Activated CD4-positive, alpha-beta memory T cell treated with anti-CD3 and anti-CD28 coated beads, Interleukin-2, amount 10 ng/mL, durations not matched to agents 7 days and 5 days (primary cell): ENCODE measurements at regions of chr11 and their contacts with region 1.

Region 1: DNA sequence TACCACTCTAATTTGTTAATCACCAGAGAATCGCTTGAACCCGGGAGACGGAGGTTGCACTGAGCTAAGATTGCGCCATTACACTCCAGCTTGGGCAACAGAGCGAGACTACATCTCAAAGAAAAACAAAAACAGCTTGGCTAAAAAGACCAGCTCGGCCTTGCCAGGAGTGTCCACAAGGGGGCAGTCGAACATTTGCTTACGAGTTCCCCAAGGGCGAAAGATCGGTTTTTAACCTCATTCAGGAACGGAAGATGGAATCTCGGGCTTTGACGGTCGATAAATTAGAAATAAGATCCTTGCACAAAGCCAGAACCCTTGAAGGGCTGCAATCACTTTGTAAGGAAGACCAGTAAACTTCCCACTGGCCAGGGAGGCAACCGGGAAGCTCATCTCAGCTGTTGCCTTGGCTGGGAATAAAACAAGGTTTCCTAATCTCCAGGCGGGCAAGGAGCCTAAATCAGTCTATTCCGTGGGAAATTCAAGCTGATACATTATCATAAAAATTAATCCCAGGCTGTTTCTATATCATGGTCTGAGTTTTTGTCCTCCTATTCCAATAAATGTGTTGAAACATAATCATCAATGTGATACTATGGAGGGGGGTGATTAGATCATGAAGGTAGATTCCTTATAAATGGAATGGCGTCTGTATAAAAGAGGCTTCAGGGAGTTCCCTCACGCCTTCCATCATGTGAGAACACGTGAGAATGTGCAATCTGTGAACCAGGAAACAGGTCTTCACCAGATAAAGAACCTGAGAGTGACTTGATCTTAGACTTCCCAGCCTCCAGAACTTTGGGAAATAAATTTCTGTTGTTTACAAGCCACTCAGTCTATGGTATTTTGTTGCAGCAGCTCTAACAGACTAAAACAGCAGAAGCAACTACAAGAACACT is 14.9 kb upstream of the SLC29A2 start:
- DNase-seq: peak; percentile 83
- H3K4me3 Mint-ChIP-seq: peak overlapping the region; percentile 12
- H3K27ac Mint-ChIP-seq: no peak overlapping the region
- H3K4me1 Mint-ChIP-seq: peaks cover 6% of the 10 kb centered on the region
- H3K27me3 Mint-ChIP-seq: peaks cover 7% of the 10 kb centered on the region

Region 2: DNA sequence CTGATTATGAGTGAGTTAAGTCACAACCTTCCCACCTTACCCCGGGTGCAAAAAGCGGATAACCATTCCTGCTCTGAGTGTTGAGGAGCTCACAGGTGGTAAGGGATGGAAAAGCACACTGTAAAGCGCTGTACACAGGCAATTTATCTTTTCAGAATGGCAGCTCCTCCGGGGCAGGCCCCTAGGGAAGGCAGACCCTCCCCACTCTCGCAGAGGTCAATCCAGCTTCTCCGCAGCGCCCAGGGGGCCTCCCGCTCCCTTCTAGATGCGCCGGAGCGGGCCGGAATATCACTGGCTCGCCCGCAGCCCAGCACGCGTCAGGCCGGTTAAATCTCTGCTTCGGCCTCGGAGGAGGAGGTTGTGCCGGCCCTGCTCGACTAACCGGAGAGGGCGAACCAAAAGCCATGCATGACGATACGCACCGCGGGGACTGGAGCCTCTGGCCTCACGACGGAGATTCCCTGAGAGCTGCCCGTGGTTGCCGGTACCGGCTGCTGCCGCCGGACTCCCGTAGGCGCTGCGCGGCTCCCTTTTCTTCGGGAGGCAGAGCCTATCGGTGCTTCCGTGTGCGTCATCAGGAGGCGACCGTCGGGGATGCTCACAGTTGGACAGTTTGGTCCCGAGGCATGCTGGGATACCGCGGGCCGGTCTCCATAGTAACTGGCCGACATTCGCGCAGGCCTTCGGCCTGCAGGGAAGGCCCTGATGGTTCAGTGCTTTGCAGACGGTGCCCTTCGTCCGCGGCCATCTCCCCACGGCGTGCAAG is 41.7 kb before region 1 on chr11 and contains the start of gene BRMS1:
- CTCF ChIA-PET with region 1: interaction called, 19 read pairs
- POLR2A ChIA-PET with region 1: interaction called, 3 read pairs
- DNase-seq: peak; percentile 97
- H3K4me3 Mint-ChIP-seq: peak within 1 kb of the TSS; percentile 96
- H3K27ac Mint-ChIP-seq: peak within 1 kb of the TSS; percentile 87
- H3K4me1 Mint-ChIP-seq: peaks cover 51% of the 10 kb centered on the region
- H3K27me3 Mint-ChIP-seq: no peaks in the 10 kb centered on the region
- total RNA-seq, gene BRMS1: 39.7 to 40.4 TPM

Region 3: GRCh38 chr11:66363805-66364535 is 22.4 kb before region 1 on chr11:
- CTCF ChIA-PET with region 1: interaction called, 35 read pairs
- POLR2A ChIA-PET with region 1: no interaction called
- DNase-seq: peak; percentile 76
- H3K4me3 Mint-ChIP-seq: no peak overlapping the region
- H3K27ac Mint-ChIP-seq: no peak overlapping the region
- H3K4me1 Mint-ChIP-seq: no peaks in the 10 kb centered on the region
- H3K27me3 Mint-ChIP-seq: no peaks in the 10 kb centered on the region

Region 4: DNA sequence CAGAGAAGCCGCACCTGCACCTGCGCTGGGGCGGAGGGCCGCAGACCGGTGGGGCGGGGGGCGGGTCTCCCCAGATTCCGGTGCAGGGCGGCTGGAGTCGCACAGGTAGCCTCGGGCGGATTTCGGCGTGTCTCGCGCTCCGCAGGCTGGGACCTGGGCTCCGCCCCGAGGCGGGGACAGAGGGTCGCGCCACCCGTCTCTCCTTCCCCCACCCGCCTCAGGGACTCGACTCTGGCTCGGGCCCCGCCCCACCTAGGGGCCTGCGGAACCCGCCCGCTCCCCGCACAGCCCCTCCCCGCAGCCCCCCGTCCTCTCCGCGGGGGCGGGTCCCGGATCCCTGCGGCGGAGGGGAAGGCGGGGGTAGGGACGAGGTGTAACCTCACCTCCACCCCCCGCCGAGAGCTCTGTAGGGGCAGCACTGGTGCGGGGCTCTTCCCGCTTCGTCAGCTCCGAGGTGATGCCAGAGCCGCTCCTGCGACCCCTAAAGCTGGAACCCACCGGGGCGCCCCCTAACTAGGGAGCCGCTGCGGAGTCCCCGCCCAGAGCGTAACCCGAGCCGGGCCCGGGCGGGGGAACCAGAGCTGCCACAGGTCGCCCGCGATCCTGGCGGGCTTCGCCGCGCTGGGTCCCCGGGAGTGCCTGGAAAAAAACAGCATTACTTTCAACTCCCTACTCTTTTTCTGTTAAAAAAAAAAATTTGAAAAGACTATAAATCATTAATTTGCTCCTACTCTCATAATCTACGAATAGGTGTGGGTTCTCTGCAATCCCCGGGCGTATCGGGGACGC is 14.6 kb before region 1 on chr11 and contains the start of gene SLC29A2:
- CTCF ChIA-PET with region 1: interaction called, 35 read pairs
- POLR2A ChIA-PET with region 1: interaction called, 4 read pairs
- DNase-seq: peak; percentile 79
- H3K4me3 Mint-ChIP-seq: peak within 1 kb of the TSS; percentile 80
- H3K27ac Mint-ChIP-seq: peak within 1 kb of the TSS; percentile 91
- H3K4me1 Mint-ChIP-seq: peaks cover 19% of the 10 kb centered on the region
- H3K27me3 Mint-ChIP-seq: peaks cover 7% of the 10 kb centered on the region
- total RNA-seq, gene SLC29A2: 8.4 to 9.0 TPM

Region 5: GRCh38 chr11:66408488-66409214 is 22.2 kb after region 1 on chr11:
- CTCF ChIA-PET with region 1: interaction called, 20 read pairs
- POLR2A ChIA-PET with region 1: no interaction called
- DNase-seq: peak; percentile 91
- H3K4me3 Mint-ChIP-seq: peak overlapping the region; percentile 62
- H3K27ac Mint-ChIP-seq: no peak overlapping the region
- H3K4me1 Mint-ChIP-seq: peaks cover 5% of the 10 kb centered on the region
- H3K27me3 Mint-ChIP-seq: peaks cover 18% of the 10 kb centered on the region

Region 6: GRCh38 chr11:66421492-66422205 is 35.2 kb after region 1 on chr11:
- CTCF ChIA-PET with region 1: interaction called, 11 read pairs
- POLR2A ChIA-PET with region 1: no interaction called
- DNase-seq: peak; percentile 90
- H3K4me3 Mint-ChIP-seq: no peak overlapping the region
- H3K27ac Mint-ChIP-seq: no peak overlapping the region
- H3K4me1 Mint-ChIP-seq: peaks cover 17% of the 10 kb centered on the region
- H3K27me3 Mint-ChIP-seq: peaks cover 31% of the 10 kb centered on the region

Region 7: GRCh38 chr11:66625041-66625751 is 238.8 kb after region 1 on chr11:
- CTCF ChIA-PET with region 1: no interaction called
- POLR2A ChIA-PET with region 1: no interaction called
- DNase-seq: no peak
- H3K4me3 Mint-ChIP-seq: no peak overlapping the region
- H3K27ac Mint-ChIP-seq: no peak overlapping the region
- H3K4me1 Mint-ChIP-seq: peaks cover 36% of the 10 kb centered on the region
- H3K27me3 Mint-ChIP-seq: no peaks in the 10 kb centered on the region